Activated B cell treated with CpG ODN at 0.5 μM for 24 hours (primary cell): ENCODE measurements at regions of chr1 and their contacts with region 1.

Region 1: GRCh38 chr1:109548321-109549267 is at the start of gene GNAI3:
- DNase-seq: peak; percentile 93
- ATAC-seq: peak; percentile 90
- H3K4me3 Mint-ChIP-seq: peak within 1 kb of the TSS; percentile 100
- H3K27ac Mint-ChIP-seq: peak within 1 kb of the TSS; percentile 99
- H3K4me1 Mint-ChIP-seq: peaks cover 56% of the 10 kb centered on the region
- H3K27me3 Mint-ChIP-seq: no peaks in the 10 kb centered on the region
- CTCF ChIP-seq: no peak
- total RNA-seq, gene GNAI3: 7.5 and 8.4 TPM in 2 replicates

Region 2: GRCh38 chr1:109472779-109473178 is 75.8 kb before region 1 on chr1:
- CTCF ChIA-PET with region 1: no interaction called
- POLR2A ChIA-PET with region 1: no interaction called
- intact Hi-C with region 1: no loop called
- DNase-seq: no peak
- ATAC-seq: no peak
- H3K4me3 Mint-ChIP-seq: no peak overlapping the region
- H3K27ac Mint-ChIP-seq: no peak overlapping the region
- H3K4me1 Mint-ChIP-seq: no peaks in the 10 kb centered on the region
- H3K27me3 Mint-ChIP-seq: peaks cover 50% of the 10 kb centered on the region
- CTCF ChIP-seq: no peak

Region 3: DNA sequence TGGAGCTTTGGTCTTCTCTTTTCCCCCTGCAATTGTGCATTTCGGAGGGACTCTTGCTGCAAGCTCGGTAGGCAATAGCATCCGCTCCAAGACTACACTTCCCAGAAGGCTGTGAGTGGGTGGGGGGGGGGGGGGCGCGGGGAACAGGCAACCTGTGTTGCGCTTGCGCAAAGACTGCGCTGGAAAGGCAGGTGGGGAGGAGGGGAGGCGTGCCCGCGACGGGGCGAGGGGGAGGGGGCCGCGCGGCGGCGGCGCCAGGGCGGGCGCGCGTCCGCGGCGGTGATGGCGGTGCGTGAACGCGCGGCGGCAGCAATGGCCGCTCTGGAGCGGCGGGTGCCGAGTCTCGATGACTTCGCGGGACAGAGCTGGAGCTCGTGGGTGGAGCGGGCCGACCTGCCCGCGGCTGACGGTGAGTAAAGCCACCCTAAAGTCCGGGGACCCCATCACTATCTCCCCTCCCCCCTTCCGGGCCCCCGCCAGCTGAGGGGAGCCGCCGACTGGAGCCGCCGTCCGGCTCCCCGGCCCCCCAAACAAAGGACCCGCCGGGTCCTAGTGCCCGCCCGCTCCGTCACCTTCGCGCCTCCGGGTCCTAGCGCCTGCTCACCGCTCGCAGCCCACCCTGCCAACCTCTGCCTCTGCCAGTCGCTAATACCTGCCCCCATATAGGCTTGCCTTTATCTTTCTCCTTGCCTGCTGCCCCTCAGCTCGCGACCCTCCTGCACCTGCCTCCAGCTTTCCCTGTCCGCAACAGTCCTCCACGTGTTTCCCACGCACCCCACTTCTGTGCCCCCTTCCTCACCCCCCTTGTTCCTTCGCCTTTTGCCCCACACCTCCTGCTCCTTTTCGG is 64.7 kb before region 1 on chr1 and contains the start of gene ATXN7L2:
- CTCF ChIA-PET with region 1: interaction called, 7 read pairs
- POLR2A ChIA-PET with region 1: interaction called, 14 read pairs
- intact Hi-C with region 1: loop called (anchors 1 kb)
- DNase-seq: peak; percentile 90
- ATAC-seq: peak; percentile 79
- H3K4me3 Mint-ChIP-seq: peak within 1 kb of the TSS; percentile 94
- H3K27ac Mint-ChIP-seq: peak within 1 kb of the TSS; percentile 91
- H3K4me1 Mint-ChIP-seq: peaks cover 27% of the 10 kb centered on the region
- H3K27me3 Mint-ChIP-seq: peaks cover 16% of the 10 kb centered on the region
- CTCF ChIP-seq: no peak
- total RNA-seq, gene ATXN7L2: 7.5 and 9.0 TPM in 2 replicates

Region 4: DNA sequence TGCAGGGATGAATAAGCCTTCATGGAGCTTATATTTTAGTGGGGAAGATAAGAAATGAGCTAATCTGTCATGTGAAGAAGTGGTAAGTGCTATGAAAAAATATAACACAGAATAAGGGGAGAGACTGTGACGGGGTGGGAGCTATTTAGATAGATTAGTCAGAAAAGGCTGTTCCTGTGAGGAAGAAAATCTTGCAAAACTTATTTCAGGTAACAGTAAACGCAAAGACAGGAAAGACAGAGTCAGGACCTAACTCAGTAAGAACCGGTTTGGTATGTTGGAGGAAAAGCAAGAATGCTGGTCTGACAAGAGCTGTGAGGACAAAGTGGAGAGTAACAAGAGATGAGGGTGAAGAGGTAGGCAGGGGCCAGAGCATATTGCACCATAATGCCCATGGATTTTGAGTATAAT is 21.8 kb after region 1 on chr1:
- CTCF ChIA-PET with region 1: interaction called, 7 read pairs
- POLR2A ChIA-PET with region 1: interaction called, 13 read pairs
- intact Hi-C with region 1: no loop called
- DNase-seq: no peak
- ATAC-seq: no peak
- H3K4me3 Mint-ChIP-seq: no peak overlapping the region
- H3K27ac Mint-ChIP-seq: no peak overlapping the region
- H3K4me1 Mint-ChIP-seq: peaks cover 34% of the 10 kb centered on the region
- H3K27me3 Mint-ChIP-seq: no peaks in the 10 kb centered on the region
- CTCF ChIP-seq: no peak

Region 5: GRCh38 chr1:109655601-109656519 is 107.3 kb after region 1 on chr1 and contains the start of gene GSTM4:
- CTCF ChIA-PET with region 1: interaction called, 6 read pairs
- POLR2A ChIA-PET with region 1: interaction called, 10 read pairs
- intact Hi-C with region 1: no loop called
- DNase-seq: peak; percentile 82
- ATAC-seq: peak; percentile 97
- H3K4me3 Mint-ChIP-seq: peak within 1 kb of the TSS; percentile 96
- H3K27ac Mint-ChIP-seq: peak within 1 kb of the TSS; percentile 94
- H3K4me1 Mint-ChIP-seq: peaks cover 24% of the 10 kb centered on the region
- H3K27me3 Mint-ChIP-seq: peaks cover 10% of the 10 kb centered on the region
- CTCF ChIP-seq: no peak
- total RNA-seq, gene GSTM4: 13.1 and 13.7 TPM in 2 replicates

Region 6: GRCh38 chr1:109910123-109910962 is 361.7 kb after region 1 on chr1 and contains the start of gene CSF1:
- CTCF ChIA-PET with region 1: no interaction called
- POLR2A ChIA-PET with region 1: no interaction called
- intact Hi-C with region 1: loop called (anchors 5 kb)
- DNase-seq: peak; percentile 40
- ATAC-seq: peak; percentile 23
- H3K4me3 Mint-ChIP-seq: peak within 1 kb of the TSS; percentile 85
- H3K27ac Mint-ChIP-seq: peak within 1 kb of the TSS; percentile 51
- H3K4me1 Mint-ChIP-seq: peaks cover 37% of the 10 kb centered on the region
- H3K27me3 Mint-ChIP-seq: peaks cover 38% of the 10 kb centered on the region
- CTCF ChIP-seq: no peak
- total RNA-seq, gene CSF1: 1.9 and 2.0 TPM in 2 replicates

Region 7: DNA sequence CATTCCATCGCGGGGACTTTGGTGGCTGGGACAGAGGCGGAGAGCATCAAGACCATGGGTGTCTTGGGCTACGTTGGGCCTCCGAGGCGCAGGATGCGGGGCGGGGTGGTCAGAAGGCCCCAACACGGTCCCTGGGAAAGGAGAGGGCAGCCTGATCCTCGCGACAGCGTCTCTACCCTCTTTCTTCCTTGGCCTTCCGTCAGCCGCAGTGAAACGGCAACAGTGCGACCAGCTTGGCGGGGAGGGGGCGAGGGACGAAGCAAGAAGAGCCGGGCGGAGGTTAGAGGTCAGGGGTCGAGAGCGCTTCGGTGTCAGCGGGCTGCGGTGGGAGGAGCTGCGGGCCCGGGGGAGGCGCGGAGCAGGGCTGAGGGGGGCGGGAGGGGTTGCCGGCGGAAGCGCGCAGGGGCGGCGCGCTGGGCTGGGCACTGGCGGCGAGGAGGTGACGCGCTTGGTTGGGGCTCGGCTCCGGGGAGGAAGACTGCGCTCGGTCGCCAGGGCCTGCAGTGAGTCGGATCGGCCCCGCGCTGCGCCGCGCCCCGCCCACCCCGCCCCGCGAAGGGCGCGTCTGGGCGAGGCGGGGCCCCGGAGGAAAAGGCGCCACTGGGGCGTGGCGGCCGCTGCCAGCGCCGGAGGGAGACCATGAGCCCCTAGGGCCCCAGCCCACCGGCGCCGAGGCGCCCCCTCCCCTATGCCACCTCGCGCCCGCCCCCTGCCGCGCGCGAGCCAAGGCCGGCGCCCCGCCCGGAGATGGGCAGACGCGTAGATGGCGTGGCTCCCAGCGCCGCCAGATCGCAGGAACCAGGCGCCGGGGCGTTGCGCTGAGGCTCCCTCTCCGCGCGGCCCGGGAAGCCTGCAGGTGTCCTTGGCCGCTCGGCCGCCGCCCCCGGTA is 661.4 kb after region 1 on chr1 and contains the start of gene KCNC4:
- CTCF ChIA-PET with region 1: no interaction called
- POLR2A ChIA-PET with region 1: interaction called, 3 read pairs
- intact Hi-C with region 1: loop called (anchors 5 kb)
- DNase-seq: peak; percentile 85
- ATAC-seq: peak; percentile 89
- H3K4me3 Mint-ChIP-seq: peak within 1 kb of the TSS; percentile 92
- H3K27ac Mint-ChIP-seq: peak within 1 kb of the TSS; percentile 90
- H3K4me1 Mint-ChIP-seq: peaks cover 32% of the 10 kb centered on the region
- H3K27me3 Mint-ChIP-seq: peaks cover 2% of the 10 kb centered on the region
- CTCF ChIP-seq: no peak
- total RNA-seq, gene KCNC4: 8.5 and 9.8 TPM in 2 replicates